ENCODE measurements at regions of chr9 and their contacts with region 1.

Region 1: GRCh38 chr9:20048985-20049384 is 260.1 kb upstream of the SLC24A2 start:
- DNase-seq: no peak
- ATAC-seq: no peak
- H3K4me3 ChIP-seq: no peak overlapping the region
- H3K27ac ChIP-seq: no peak overlapping the region
- H3K4me1 ChIP-seq: no peaks in the 10 kb centered on the region
- H3K27me3 ChIP-seq: peaks cover 5% of the 10 kb centered on the region; the same call in 1 of the 2 replicates
- CTCF ChIP-seq: no peak
- POLR2A ChIP-seq: no peak
- RAD21 ChIP-seq: no peak

Region 2: GRCh38 chr9:20087481-20087880 is 38.5 kb after region 1 on chr9:
- CTCF ChIA-PET with region 1: no interaction called
- POLR2A ChIA-PET with region 1: no interaction called
- dilution Hi-C with region 1: no loop called
- in situ Hi-C with region 1: no loop called
- intact Hi-C with region 1: loop called (anchors 1 kb)
- DNase-seq: peak; percentile 6
- ATAC-seq: no peak
- H3K4me3 ChIP-seq: no peak overlapping the region
- H3K27ac ChIP-seq: no peak overlapping the region
- H3K4me1 ChIP-seq: no peaks in the 10 kb centered on the region
- H3K27me3 ChIP-seq: no peaks in the 10 kb centered on the region
- CTCF ChIP-seq: no peak
- POLR2A ChIP-seq: no peak
- RAD21 ChIP-seq: no peak